PC-3 (cell line): ENCODE measurements at regions of chr3 and their contacts with region 1.

Region 1: DNA sequence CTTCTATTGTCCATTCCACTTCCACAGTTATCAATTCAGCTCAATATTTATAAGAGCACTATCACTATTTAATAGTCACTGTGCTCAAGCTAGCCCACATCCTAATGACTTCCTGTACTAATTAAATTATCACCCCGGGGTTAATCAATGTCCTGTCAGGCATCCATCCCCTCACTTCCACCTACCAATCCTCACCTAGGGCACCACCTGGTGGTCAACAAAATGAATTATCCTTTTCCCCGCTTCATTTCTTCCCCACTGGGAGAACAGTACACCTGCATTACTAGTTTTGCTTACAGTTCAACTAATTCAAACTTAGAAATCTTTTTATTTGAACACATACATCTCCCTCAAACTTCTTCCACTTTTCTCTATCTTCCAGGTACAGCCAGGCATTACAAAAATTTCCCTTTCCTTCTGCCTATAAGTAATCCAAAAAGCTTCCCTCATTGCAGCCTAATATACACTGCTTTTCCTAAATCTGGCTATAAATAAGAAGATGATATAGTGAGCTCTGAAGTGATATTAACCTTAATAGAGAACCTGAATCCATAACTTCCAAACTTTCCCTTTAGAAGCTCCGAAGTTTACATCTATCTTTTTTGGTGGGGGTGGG is 68.5 kb downstream of the TMCC1 start:
- DNase-seq: peak; percentile 62
- ATAC-seq: peak; percentile 41
- H3K4me3 ChIP-seq: no peak overlapping the region
- H3K27ac ChIP-seq: no peak overlapping the region
- H3K4me1 ChIP-seq: peaks cover 4% of the 10 kb centered on the region
- H3K27me3 ChIP-seq: no peaks in the 10 kb centered on the region
- CTCF ChIP-seq: peak; percentile 81

Region 2: GRCh38 chr3:129627429-129628168 is 197.4 kb before region 1 on chr3:
- CTCF ChIA-PET with region 1: interaction called, 5 read pairs
- POLR2A ChIA-PET with region 1: no interaction called
- intact Hi-C with region 1: loop called (anchors 1 kb)
- DNase-seq: peak; percentile 67
- ATAC-seq: peak; percentile 50
- H3K4me3 ChIP-seq: no peak overlapping the region
- H3K27ac ChIP-seq: no peak overlapping the region
- H3K4me1 ChIP-seq: peaks cover 16% of the 10 kb centered on the region
- H3K27me3 ChIP-seq: no peaks in the 10 kb centered on the region
- CTCF ChIP-seq: peak; percentile 75

Region 3: DNA sequence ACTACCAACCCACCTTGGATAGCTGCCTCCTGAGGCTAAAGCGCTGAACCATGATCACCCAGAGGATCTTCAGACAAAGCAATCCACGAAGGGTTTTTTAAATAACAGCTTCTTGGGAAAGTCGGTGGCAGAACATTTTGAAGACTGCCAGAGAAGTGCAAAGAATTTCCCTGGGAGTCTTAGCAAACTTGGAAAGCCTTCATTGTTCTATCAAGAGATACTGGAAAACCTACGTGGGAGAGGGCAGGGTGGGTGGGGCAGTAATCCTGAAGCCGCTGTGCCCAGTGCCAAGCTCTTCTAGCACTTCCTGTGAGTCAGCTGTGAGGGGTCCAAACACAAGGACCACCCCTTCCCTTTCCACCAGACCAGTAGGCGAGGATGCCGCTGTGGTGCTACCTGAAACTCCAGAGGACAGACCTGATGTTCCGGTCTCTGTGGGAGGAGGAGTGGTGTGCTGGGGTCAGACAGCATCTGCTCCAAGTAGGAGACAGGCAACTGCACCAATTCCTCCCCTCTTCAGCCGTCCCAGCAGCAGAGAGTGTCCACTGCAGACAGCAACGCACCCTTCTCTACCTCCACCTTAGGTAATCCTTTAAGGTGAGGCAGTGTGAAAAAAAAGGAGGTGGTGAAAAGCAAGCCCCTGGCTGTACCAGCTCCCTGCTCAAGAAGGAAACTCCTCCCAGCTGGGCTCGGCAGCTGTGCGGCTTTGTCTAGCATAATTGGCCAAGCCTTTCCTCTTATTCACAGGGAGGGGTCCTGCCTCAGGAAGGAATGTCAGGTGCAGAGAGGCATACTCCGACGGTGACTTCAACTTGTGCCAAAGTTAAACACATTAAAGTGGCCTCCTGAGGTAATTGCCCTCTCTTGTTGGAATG is 30.5 kb before region 1 on chr3:
- CTCF ChIA-PET with region 1: interaction called, 3 read pairs
- POLR2A ChIA-PET with region 1: interaction called, 4 read pairs
- intact Hi-C with region 1: loop called (anchors 2 kb)
- DNase-seq: peak; percentile 92
- ATAC-seq: peak; percentile 80
- H3K4me3 ChIP-seq: peak overlapping the region; percentile 90
- H3K27ac ChIP-seq: peak overlapping the region; percentile 99
- H3K4me1 ChIP-seq: peaks cover 36% of the 10 kb centered on the region
- H3K27me3 ChIP-seq: no peaks in the 10 kb centered on the region
- CTCF ChIP-seq: no peak

Region 4: GRCh38 chr3:129859272-129859671 is 34.2 kb after region 1 on chr3:
- CTCF ChIA-PET with region 1: no interaction called
- POLR2A ChIA-PET with region 1: no interaction called
- intact Hi-C with region 1: no loop called
- DNase-seq: no peak
- ATAC-seq: no peak
- H3K4me3 ChIP-seq: no peak overlapping the region
- H3K27ac ChIP-seq: no peak overlapping the region
- H3K4me1 ChIP-seq: peaks cover 23% of the 10 kb centered on the region
- H3K27me3 ChIP-seq: no peaks in the 10 kb centered on the region
- CTCF ChIP-seq: no peak

Region 5: DNA sequence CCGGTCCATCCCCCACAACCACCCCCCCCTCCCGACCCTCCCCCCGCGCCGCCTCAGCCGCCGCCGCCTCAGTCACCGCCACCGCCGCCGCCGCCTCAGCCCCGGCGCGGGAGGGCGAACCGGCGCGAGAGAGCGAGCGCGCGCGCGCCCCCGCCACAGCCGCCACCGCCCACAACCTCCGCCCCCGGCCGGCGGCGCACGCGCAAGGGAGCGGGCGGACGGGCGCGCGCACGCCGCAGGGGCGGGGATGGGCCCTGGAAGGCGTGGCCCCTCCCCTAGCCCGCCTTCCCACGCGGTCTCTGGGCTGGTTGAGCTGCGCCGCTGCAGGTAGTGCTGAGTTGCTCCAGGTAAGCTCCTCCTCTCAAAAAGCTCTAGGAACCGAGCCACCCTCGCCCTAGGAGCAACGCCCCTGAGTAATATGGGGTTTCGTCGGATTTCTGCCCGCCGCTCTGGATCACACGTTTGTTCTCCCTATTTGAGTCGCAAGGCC is 68.6 kb after region 1 on chr3 and contains the start of gene TMCC1:
- CTCF ChIA-PET with region 1: interaction called, 3 read pairs
- POLR2A ChIA-PET with region 1: interaction called, 4 read pairs
- intact Hi-C with region 1: loop called (anchors 5 kb)
- DNase-seq: peak; percentile 92
- ATAC-seq: peak; percentile 88
- H3K4me3 ChIP-seq: peak within 1 kb of the TSS; percentile 100
- H3K27ac ChIP-seq: peak within 1 kb of the TSS; percentile 52
- H3K4me1 ChIP-seq: peaks cover 29% of the 10 kb centered on the region
- H3K27me3 ChIP-seq: no peaks in the 10 kb centered on the region
- CTCF ChIP-seq: no peak
- total RNA-seq, gene TMCC1: 6.2 and 8.5 TPM in 2 replicates